Transverse colon (tissue), 4 donors: ENCODE measurements at regions of chr11 and their contacts with region 1.

Region 1: DNA sequence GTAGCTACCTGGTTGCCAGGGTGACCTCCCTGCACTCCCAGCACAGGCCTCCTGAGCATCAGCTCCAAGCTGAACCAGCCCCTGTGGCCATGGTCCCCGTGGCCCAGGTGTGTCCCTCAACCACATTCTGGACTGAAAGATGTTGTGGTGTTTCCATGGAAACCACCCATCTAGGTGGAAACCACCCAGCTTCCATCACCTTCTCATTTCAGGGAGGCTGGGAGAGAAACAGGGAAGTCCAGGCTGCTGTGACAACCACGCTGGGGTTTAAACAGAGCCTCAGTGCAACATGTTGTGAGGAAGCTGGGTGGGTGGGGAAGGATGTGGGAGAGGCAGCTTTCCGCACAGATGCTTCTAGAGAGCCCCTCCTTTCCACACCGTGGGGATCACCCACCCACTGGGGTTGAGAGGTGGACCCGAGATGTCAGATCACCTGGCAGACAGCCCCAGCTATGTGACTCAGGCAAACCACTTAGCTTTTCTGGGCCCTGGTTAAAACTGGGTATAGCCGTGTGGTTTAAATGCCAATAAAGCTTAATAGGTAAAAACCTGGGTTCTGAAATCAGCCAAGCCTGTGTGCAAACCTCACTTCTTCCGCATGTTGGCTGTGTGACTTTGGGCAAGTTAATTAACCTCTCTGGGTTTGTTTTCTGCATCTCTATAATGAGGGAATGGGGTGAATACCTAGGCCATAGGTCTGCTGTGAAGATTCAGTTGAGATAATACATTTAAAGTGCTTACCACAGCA is 46.4 kb downstream of the CD82 start:
- DNase-seq: peak; percentile 26
- H3K4me3 ChIP-seq: no peak overlapping the region
- H3K27ac ChIP-seq: no peak overlapping the region
- H3K4me1 ChIP-seq: peaks cover 3 to 15% (median 12%) of the 10 kb centered on the region in 4 donors
- H3K27me3 ChIP-seq: no peaks in the 10 kb centered on the region
- CTCF ChIP-seq: no peak
- EP300 ChIP-seq: no peak
- POLR2A ChIP-seq: no peak

Region 2: DNA sequence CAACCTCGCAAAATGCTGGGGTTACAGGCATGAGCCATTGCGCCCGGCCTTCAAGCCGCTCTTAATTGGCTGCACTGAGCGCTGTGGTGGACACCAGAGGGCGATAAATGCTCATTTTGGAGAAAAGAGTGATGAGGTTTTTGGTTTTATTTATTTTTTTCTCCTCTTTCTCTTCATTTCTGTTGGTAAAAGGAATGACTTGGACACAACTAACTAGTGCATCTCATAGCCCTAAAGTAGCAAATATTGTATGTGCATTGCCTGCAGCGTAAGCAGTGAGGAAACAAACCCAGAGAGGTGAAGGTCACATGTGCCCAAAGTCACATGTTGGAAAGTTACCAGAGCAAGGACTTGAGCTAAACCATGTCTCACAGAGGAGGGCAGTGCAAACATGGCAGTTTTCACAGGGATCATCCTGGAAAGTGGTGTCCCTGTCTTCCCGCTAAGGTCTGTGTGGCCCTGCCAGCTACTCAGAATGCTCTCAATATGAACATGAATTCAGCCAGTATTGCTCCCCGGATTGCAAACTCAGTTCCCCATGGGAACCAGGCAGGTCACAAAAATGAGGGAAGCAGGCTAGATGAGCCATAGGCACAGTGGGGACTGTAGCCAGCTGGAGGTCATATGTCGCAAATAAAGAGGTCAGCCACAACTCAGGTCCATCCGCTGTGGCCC is 55.0 kb before region 1 on chr11:
- in situ Hi-C with region 1: loop called (anchors 5 to 10 kb)
- intact Hi-C with region 1: loop called (anchors 1 kb)
- DNase-seq: peak; percentile 65
- H3K4me3 ChIP-seq: no peak overlapping the region
- H3K27ac ChIP-seq: no peak overlapping the region
- H3K4me1 ChIP-seq: peaks cover 0 to 10% (median 2%) of the 10 kb centered on the region in 4 donors
- H3K27me3 ChIP-seq: no peaks in the 10 kb centered on the region
- CTCF ChIP-seq: peak; percentile 78 to 88 (median 85)
- EP300 ChIP-seq: no peak
- POLR2A ChIP-seq: no peak

Region 3: DNA sequence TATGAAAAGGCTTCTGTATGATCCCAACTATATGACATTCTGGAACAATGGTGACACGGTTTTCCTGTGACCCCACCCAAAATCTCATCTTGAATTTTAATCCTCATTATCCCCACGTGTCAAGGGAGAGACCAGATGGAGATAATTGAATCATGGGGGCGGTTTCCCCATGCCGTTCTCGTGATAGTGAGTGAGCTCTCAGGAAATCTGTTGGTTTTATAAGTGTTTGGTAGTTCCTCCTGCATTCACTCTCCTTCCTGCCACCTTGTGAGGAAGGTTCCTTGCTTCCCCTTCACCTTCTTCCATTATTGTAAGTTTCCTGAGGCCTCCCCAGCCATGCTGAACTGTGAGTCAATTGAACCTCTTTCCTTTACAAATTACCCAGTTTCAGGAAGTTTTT is 61.8 kb after region 1 on chr11:
- in situ Hi-C with region 1: no loop called
- intact Hi-C with region 1: no loop called
- DNase-seq: no peak
- H3K4me3 ChIP-seq: no peak overlapping the region
- H3K27ac ChIP-seq: no peak overlapping the region
- H3K4me1 ChIP-seq: no peaks in the 10 kb centered on the region
- H3K27me3 ChIP-seq: peaks cover 15% of the 10 kb centered on the region
- CTCF ChIP-seq: no peak
- EP300 ChIP-seq: no peak
- POLR2A ChIP-seq: no peak